HepG2 (cell line): ENCODE measurements at regions of chr7 and their contacts with region 1.

Region 1: GRCh38 chr7:28020302-28020940 is 160.2 kb downstream of the JAZF1 start:
- DNase-seq: peak; percentile 66
- ATAC-seq: peak; percentile 97
- H3K4me3 ChIP-seq: no peak overlapping the region
- H3K27ac ChIP-seq: no peak overlapping the region
- H3K4me1 ChIP-seq: no peaks in the 10 kb centered on the region
- H3K27me3 ChIP-seq: peaks cover 2 to 50% of the 10 kb centered on the region in 2 experiments; a peak in 4 of 5 replicates
- CTCF ChIP-seq: peak; percentile 94
- EP300 ChIP-seq: no peak
- POLR2A ChIP-seq: no peak
- RAD21 ChIP-seq: peak; percentile 76

Region 2: GRCh38 chr7:27210441-27211083 is 809.9 kb before region 1 on chr7:
- CTCF ChIA-PET with region 1: no interaction called
- POLR2A ChIA-PET with region 1: no interaction called
- in situ Hi-C with region 1: no loop called
- intact Hi-C with region 1: loop called (anchors 5 kb)
- DNase-seq: no peak
- ATAC-seq: peak; percentile 74
- H3K4me3 ChIP-seq: peak overlapping the region; percentile 23 to 56 (median 51); a peak in 3 of 6 replicates
- H3K27ac ChIP-seq: no peak overlapping the region
- H3K4me1 ChIP-seq: peaks cover 15% of the 10 kb centered on the region
- H3K27me3 ChIP-seq: peaks cover 0 to 80% of the 10 kb centered on the region in 2 experiments; a peak in 4 of 5 replicates
- CTCF ChIP-seq: peak; percentile 70
- EP300 ChIP-seq: no peak
- POLR2A ChIP-seq: no peak
- RAD21 ChIP-seq: 0 out of 2 replicates have a peak, but pooled peaks have one; percentile 19

Region 3: GRCh38 chr7:27689591-27690164 is 330.7 kb before region 1 on chr7:
- CTCF ChIA-PET with region 1: no interaction called
- POLR2A ChIA-PET with region 1: no interaction called
- in situ Hi-C with region 1: no loop called
- intact Hi-C with region 1: loop called (anchors 5 kb)
- DNase-seq: peak; percentile 35
- ATAC-seq: peak; percentile 92
- H3K4me3 ChIP-seq: no peak overlapping the region
- H3K27ac ChIP-seq: no peak overlapping the region
- H3K4me1 ChIP-seq: peaks cover 40% of the 10 kb centered on the region
- H3K27me3 ChIP-seq: no peaks in the 10 kb centered on the region
- CTCF ChIP-seq: peak; percentile 87
- EP300 ChIP-seq: no peak
- POLR2A ChIP-seq: no peak
- RAD21 ChIP-seq: peak; percentile 76

Region 4: GRCh38 chr7:28078036-28078901 is 57.8 kb after region 1 on chr7:
- CTCF ChIA-PET with region 1: no interaction called
- POLR2A ChIA-PET with region 1: no interaction called
- in situ Hi-C with region 1: no loop called
- intact Hi-C with region 1: no loop called
- DNase-seq: peak; percentile 24
- ATAC-seq: no peak
- H3K4me3 ChIP-seq: no peak overlapping the region
- H3K27ac ChIP-seq: no peak overlapping the region
- H3K4me1 ChIP-seq: no peaks in the 10 kb centered on the region
- H3K27me3 ChIP-seq: peaks cover 0 to 6% of the 10 kb centered on the region in 2 experiments; a peak in 2 of 5 replicates
- CTCF ChIP-seq: peak; percentile 74
- EP300 ChIP-seq: no peak
- POLR2A ChIP-seq: no peak
- RAD21 ChIP-seq: no peak